HEK293 (cell line): ENCODE measurements at regions of chr17 and their contacts with region 1.

Region 1: GRCh38 chr17:74457146-74457819 is 9.2 kb upstream of the CD300A start:
- H3K4me3 ChIP-seq: no peak overlapping the region
- H3K27ac ChIP-seq: no peak overlapping the region
- H3K4me1 ChIP-seq: peaks cover 8% of the 10 kb centered on the region
- CTCF ChIP-seq: peak; percentile 92

Region 2: DNA sequence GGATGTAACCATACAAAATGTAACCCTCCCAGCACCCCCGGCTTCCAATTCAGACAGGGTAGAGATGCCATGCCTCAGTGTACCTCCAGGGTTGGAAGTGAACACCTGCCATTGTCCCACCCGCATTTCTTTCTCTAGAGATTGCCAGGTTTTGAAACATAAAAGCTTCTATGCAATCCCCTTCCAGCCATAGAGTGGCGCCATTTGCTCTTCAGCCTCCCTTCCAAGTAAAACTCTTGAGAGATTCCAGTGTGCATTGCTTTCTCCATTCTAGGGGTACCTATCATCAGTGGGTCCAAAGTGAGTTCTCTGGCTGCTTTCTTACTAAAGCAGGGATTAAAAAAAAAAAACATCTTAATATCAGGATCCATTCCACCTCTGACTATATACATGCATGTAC is 386.9 kb before region 1 on chr17:
- CTCF ChIA-PET with region 1: no interaction called
- POLR2A ChIA-PET with region 1: no interaction called
- H3K4me3 ChIP-seq: no peak overlapping the region
- H3K27ac ChIP-seq: no peak overlapping the region
- H3K4me1 ChIP-seq: no peaks in the 10 kb centered on the region
- CTCF ChIP-seq: no peak

Region 3: GRCh38 chr17:74296548-74296936 is 160.7 kb before region 1 on chr17:
- CTCF ChIA-PET with region 1: interaction called, 13 read pairs
- POLR2A ChIA-PET with region 1: no interaction called
- H3K4me3 ChIP-seq: no peak overlapping the region
- H3K27ac ChIP-seq: no peak overlapping the region
- H3K4me1 ChIP-seq: no peaks in the 10 kb centered on the region
- CTCF ChIP-seq: no peak; the same call in 1 of the 2 replicates

Region 4: DNA sequence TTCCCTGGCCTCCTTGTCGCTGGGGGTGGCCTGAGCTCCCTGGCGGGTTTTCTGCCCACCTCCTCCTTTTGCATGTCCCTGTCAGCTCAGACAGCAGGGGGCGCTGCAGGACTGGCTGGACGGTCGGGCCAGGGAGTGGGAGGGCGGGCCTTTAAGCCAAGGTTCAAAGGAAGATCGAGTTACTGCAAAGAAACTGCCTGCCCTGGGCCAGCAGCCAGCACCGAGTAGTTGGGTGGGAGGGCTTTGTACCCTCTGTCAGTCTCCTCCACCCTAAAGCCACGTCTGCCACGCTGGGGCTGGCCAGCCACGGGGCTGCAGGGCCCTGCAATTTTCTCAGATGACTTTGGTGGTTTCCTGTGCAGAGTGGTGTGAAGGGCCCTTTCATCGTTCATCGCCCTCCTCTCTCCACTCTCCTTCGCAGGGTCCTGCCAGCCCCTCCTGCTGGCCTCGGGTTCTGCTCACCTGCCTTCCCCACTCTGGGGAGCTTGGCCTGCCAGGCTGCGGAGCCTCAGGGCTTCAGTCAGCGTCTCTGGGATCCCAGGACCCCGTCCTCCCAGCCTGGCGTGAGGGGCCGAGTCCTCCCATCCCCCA is 77.7 kb before region 1 on chr17:
- CTCF ChIA-PET with region 1: interaction called, 453 read pairs
- POLR2A ChIA-PET with region 1: interaction called, 16 read pairs
- H3K4me3 ChIP-seq: no peak overlapping the region
- H3K27ac ChIP-seq: no peak overlapping the region
- H3K4me1 ChIP-seq: peaks cover 6% of the 10 kb centered on the region
- CTCF ChIP-seq: peak; percentile 83

Region 5: DNA sequence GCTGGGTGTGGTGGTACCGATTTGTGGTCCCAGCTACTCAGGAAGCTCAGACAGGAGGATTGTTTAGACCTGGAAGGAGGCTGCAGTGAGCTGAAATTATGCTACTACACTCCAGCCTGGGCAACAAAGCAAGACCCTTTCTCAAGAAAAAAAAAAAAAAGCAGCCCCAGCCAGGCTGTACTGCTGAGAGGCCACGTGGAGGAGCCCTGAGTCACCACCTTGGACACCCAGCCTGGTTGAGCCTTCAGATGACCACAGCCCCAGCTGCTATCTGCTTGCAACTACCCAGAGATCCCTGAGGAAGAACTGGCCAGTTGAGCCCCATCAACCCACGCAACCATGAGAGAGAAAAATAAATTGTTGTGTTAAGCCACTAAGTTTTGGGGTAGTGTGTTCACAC is 49.0 kb before region 1 on chr17:
- CTCF ChIA-PET with region 1: interaction called, 61 read pairs
- POLR2A ChIA-PET with region 1: no interaction called
- H3K4me3 ChIP-seq: no peak overlapping the region
- H3K27ac ChIP-seq: no peak overlapping the region
- H3K4me1 ChIP-seq: no peaks in the 10 kb centered on the region
- CTCF ChIP-seq: no peak

Region 6: GRCh38 chr17:74430706-74431567 is 26.3 kb before region 1 on chr17:
- CTCF ChIA-PET with region 1: interaction called, 151 read pairs
- POLR2A ChIA-PET with region 1: interaction called, 7 read pairs
- H3K4me3 ChIP-seq: peak overlapping the region; percentile 59
- H3K27ac ChIP-seq: peak overlapping the region; percentile 98
- H3K4me1 ChIP-seq: peaks cover 15% of the 10 kb centered on the region
- CTCF ChIP-seq: 0 out of 2 replicates have a peak, but pooled peaks have one; percentile 46

Region 7: DNA sequence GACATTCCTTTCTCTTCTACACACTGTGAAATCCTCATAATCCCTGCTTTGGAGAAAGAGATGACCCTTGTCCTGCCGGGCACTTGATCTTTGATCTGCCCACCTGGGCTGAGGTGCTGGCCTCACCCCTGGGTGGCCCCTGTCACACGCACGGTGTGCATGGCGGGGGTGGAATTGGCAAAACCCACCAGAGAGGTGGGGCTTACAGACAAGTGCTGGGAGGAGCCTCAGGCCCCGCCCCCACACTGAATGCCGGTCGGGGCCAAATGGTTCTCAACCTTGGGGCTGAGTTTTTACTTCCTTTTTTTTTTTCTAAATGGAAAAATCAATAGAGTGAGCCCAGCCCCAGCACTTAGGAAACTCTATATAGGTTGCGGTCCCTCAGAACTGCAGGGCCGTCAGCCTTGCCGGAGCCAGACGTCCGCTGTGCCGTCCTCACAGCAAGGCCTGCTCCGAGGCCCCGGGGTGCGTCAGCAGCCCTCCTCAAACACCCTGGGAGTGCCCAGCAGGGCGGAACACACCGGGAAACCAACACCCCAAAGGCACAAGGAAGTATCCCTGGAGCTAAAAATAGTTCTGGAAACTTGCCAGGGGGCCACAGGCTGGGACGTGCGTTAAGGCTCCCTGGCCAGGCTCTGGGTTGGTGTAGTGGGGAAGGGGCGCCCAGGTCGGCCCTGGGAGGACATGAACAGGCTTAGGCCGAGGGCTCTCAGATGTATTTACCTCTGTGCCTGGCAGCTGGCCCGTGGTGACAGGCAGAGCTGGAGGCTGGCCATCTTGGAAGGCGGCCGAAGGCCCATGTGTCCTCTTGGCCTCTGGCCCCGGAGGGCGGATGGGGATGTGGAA is 14.4 kb before region 1 on chr17:
- CTCF ChIA-PET with region 1: interaction called, 151 read pairs
- POLR2A ChIA-PET with region 1: interaction called, 12 read pairs
- H3K4me3 ChIP-seq: no peak overlapping the region
- H3K27ac ChIP-seq: peak overlapping the region; percentile 73
- H3K4me1 ChIP-seq: peaks cover 5% of the 10 kb centered on the region; the same call in 1 of the 2 replicates
- CTCF ChIP-seq: no peak